ENCODE measurements at regions of chr10 and their contacts with region 1.

Region 1: GRCh38 chr10:68423522-68423921 is 16.4 kb upstream of the RUFY2 start:
- DNase-seq: no peak
- H3K4me3 ChIP-seq: no peak overlapping the region
- H3K27ac ChIP-seq: peak overlapping the region; percentile 54
- H3K4me1 ChIP-seq: no peaks in the 10 kb centered on the region
- H3K27me3 ChIP-seq: no peaks in the 10 kb centered on the region
- CTCF ChIP-seq: no peak

Region 2: DNA sequence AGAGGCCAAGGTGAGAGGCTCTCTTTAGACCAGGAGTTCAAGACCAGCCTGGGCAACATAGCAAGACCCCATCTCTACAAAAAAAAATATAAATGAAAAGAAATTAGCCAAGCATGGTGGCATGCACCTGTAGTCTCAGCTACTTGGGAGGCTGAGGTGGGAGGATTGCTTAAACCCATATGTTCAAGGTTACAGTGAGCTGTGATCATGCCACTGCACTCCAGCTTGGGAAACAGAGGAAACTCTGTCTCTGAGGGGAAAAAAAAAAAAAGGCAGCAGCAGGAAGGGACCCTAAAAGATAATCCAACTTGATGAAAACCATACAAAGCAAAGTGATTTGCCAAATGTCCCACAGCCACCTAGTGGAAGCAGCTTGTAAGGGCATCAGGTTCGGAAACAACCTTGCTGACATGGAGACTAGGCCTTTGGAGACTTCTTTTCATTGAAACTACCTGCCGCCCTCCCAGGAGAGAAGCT is 75.2 kb before region 1 on chr10:
- CTCF ChIA-PET with region 1: interaction called, 11 read pairs
- POLR2A ChIA-PET with region 1: no interaction called
- intact Hi-C with region 1: no loop called
- DNase-seq: peak; percentile 81
- H3K4me3 ChIP-seq: no peak overlapping the region
- H3K27ac ChIP-seq: no peak overlapping the region
- H3K4me1 ChIP-seq: no peaks in the 10 kb centered on the region
- H3K27me3 ChIP-seq: no peaks in the 10 kb centered on the region
- CTCF ChIP-seq: peak; percentile 83

Region 3: DNA sequence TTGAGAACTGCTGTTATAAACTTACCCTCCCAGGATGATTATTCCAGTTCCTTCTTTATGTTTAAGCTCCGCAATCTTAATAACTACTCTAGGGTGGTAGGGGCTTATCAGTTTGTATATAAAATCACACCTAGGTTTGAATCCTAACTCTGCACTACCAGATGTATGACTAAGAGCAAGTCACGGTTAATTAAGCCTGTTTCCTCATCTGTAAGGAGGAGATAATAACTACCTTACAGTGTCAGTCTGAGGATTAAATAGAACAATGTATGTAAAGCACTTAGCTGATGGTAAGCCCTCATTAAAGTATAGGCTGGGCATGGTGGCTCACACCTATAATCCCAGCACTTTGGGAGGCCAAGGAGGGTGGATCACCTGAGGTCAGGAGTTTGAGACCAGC is 39.0 kb after region 1 on chr10:
- CTCF ChIA-PET with region 1: no interaction called
- POLR2A ChIA-PET with region 1: interaction called, 18 read pairs
- intact Hi-C with region 1: no loop called
- DNase-seq: peak; percentile 22
- H3K4me3 ChIP-seq: no peak overlapping the region
- H3K27ac ChIP-seq: no peak overlapping the region
- H3K4me1 ChIP-seq: no peaks in the 10 kb centered on the region
- H3K27me3 ChIP-seq: no peaks in the 10 kb centered on the region
- CTCF ChIP-seq: no peak

Measured in A673 (cell line).